Common myeloid progenitor, CD34-positive (primary cell): ENCODE measurements at regions of chr3 and their contacts with region 1.

Region 1: DNA sequence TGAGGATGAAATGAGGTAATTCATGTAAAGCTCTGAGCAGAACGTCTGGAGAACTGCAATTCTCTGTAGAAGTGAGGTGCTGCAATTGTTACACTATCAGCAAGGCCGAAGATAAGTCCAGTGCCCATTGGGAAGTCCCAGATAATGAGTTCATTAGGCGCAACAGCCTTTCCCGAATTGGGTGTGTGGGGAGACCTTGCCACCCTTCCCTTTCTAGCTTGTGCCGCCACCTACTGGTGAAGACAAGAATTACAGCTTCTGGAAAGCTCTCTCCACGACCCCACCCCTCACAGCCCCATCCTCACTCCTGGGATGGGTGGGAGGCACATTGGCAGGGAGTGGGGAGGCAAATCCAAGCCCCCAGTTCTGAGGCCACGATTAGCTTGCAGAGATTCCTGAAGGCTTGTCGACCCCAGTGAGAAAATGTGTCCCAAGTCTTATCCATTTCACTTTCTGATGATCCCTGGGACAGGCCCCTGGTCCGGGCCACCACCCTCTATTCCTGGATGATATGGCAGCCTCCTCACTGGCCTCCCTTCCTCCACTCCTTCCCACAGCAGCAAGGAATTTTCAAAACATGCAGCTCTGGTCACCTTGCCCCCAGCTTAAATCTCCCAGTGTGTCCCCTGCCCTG is 36.4 kb downstream of the FAM3D start:
- DNase-seq: peak; percentile 50 to 67 (median 60)
- H3K4me3 ChIP-seq: no peak overlapping the region
- H3K27ac ChIP-seq: no peak overlapping the region
- H3K4me1 ChIP-seq: peaks cover 0 to 5% (median 0%) of the 10 kb centered on the region in 4 experiments
- H3K27me3 ChIP-seq: no peaks in the 10 kb centered on the region

Region 2: DNA sequence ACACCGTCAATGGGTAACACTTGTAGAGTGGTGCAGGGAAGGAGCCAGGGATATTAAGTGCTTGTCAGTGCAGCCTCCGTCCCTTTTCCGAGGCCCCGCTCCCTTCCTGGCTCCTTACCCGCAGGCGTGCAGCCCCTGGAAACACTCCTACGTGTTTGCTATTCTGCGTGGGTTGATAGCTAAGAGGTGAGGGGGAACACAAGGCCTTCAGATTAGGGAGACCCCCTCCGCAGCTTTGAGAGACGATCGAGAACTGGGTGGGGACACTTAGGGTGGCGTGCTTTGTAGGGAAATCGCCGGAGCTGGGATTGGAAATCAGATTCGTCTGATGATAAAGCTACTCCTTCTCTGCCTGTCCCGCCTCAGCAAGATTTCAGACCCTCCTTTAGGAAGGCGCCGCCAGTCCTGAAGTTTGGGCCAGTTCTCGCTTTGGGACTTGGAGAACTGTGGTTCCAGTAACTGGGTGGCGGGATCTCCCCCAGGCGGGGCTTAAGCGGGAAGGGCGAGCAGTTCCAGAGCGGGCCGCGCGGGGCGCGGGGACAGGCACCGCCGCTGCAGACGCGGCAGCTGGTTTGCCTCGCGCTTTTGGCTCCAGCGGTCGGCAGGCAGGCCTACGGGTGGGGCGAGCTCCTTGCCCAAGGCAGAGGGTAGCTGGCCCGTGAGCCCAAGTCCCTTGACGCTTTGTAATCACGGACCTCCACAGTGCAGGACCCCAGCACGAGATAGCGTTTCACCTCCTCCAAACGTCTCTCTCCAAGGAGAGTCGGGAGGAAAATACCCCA is 45.0 kb before region 1 on chr3:
- CTCF ChIA-PET with region 1: interaction called, 239 read pairs
- POLR2A ChIA-PET with region 1: no interaction called
- DNase-seq: peak; percentile 58 to 83 (median 79)
- H3K4me3 ChIP-seq: peak overlapping the region; percentile 56 to 95 (median 77)
- H3K27ac ChIP-seq: no peak overlapping the region
- H3K4me1 ChIP-seq: peaks cover 0 to 28% (median 15%) of the 10 kb centered on the region in 4 experiments
- H3K27me3 ChIP-seq: peaks cover 2 to 47% (median 33%) of the 10 kb centered on the region in 5 experiments

Region 3: DNA sequence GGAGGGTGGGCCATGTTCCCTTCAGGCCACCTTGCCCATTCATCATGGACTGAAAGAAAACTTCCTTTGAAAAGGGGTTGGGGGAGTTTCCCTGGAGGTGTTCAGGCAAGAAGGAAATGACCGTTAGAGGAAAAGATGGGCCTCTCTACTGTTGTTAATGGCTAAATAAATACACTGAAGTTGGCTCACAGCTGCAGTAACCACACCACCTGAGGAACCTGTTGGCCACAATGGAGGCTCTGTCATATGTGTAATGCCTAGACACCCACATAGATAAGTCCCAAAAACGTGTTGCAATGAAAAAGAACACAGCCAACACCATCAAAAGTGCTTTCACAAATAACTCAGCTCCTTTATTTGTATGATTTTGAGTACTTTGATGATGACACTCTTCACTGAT is 74.6 kb after region 1 on chr3:
- CTCF ChIA-PET with region 1: no interaction called
- POLR2A ChIA-PET with region 1: no interaction called
- DNase-seq: peak in 2 of 3 donors; percentile 36
- H3K4me3 ChIP-seq: no peak overlapping the region
- H3K27ac ChIP-seq: no peak overlapping the region
- H3K4me1 ChIP-seq: peaks cover 2 to 12% (median 4%) of the 10 kb centered on the region in 4 experiments
- H3K27me3 ChIP-seq: no peaks in the 10 kb centered on the region